ENCODE measurements at regions of chr21 and their contacts with region 1.

Region 1: DNA sequence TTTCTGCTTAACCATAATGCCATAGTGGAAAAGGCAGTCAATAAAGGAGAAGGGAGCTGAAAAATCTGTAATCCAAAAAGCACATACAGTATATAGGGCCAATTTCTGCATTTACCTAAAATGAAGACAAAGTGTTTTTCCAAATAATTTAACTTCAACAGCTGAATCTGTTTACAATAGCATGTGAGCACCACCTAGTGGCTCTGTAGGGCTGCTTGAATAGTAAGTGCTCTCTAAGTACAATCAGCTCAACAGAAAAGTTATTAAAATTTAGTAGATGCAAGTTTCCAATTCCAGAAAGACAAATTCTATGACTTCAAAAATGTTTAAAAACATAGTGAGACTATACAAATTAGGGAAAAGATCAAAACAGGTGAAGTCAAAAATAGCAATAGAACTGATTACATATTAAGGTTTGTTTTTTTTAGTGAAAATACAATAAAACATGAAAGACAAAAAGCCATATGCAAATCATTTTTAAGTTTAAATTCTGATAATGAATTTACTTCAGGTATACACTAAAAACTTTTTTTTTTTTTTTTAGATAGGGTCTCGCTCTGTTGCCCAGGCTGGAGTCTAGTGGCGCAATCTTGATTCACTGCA is 220.0 kb downstream of the SETD4 start:
- ATAC-seq: peak in 4 of 8 experiments; percentile 43 to 58 (median 57)
- H3K4me3 ChIP-seq: no peak overlapping the region
- H3K27ac ChIP-seq: no peak overlapping the region
- H3K4me1 ChIP-seq: no peaks in the 10 kb centered on the region

Region 2: GRCh38 chr21:34745557-34746255 is 1094.6 kb before region 1 on chr21:
- in situ Hi-C with region 1: loop called in 6 of 9 experiments (anchors 25 kb)
- ATAC-seq: peak; percentile 63 to 98 (median 87)
- H3K4me3 ChIP-seq: no peak overlapping the region
- H3K27ac ChIP-seq: no peak overlapping the region
- H3K4me1 ChIP-seq: no peaks in the 10 kb centered on the region

Region 3: GRCh38 chr21:35048706-35049617 is 791.3 kb before region 1 on chr21 and contains the start of gene RUNX1:
- in situ Hi-C with region 1: loop called in 1 of 9 experiments (anchors 25 kb)
- ATAC-seq: no peak
- H3K4me3 ChIP-seq: no peak within 1 kb of the TSS
- H3K27ac ChIP-seq: no peak within 1 kb of the TSS
- H3K4me1 ChIP-seq: peaks cover 11 to 26% of the 10 kb centered on the region in 2 donors
- total RNA-seq, gene RUNX1: 0.05 to 49.0 (median 3.6) TPM

Region 4: DNA sequence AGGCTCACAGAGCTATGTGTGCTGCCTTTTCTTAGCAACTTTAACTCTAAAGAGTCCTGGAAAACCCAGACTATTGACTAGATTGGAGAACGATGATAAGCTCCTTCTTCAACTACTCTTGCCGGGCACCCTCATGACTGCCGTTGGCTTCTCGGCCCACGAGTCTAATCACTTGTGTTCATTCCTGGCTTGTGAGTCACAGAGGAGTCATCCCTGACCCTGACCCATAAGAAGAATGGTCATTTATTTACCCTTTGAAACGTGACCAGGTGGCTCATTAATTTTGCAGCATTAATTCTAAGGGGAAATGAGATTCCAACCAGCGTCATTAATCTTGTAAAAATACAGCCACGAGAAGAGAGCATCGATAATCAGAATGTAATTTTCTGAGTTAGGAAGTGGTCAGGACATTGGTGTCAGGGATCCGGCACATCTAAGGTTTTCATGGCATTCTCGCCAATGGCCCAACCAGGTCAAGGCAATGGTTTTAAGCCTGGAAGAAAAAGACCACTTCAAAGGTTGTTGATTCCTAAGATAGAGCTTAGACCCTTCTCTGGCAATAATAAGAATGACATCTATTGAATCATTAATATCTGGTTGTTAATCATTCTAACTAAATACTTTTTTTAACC is 607.6 kb before region 1 on chr21:
- in situ Hi-C with region 1: no loop called
- ATAC-seq: peak in 5 of 8 experiments; percentile 94 to 99 (median 98)
- H3K4me3 ChIP-seq: no peak overlapping the region
- H3K27ac ChIP-seq: no peak overlapping the region
- H3K4me1 ChIP-seq: peaks cover 11 to 12% of the 10 kb centered on the region in 2 donors

Region 5: GRCh38 chr21:35400233-35400957 is 439.9 kb before region 1 on chr21:
- in situ Hi-C with region 1: loop called in 1 of 9 experiments (anchors 25 kb)
- ATAC-seq: peak in 6 of 8 experiments; percentile 39 to 85 (median 57)
- H3K4me3 ChIP-seq: no peak overlapping the region
- H3K27ac ChIP-seq: no peak overlapping the region
- H3K4me1 ChIP-seq: no peaks in the 10 kb centered on the region

Region 6: GRCh38 chr21:35508139-35508888 is 332.0 kb before region 1 on chr21:
- in situ Hi-C with region 1: loop called in 1 of 9 experiments (anchors 25 kb)
- ATAC-seq: peak in 3 of 8 experiments; percentile 14 to 80 (median 66)
- H3K4me3 ChIP-seq: no peak overlapping the region
- H3K27ac ChIP-seq: no peak overlapping the region
- H3K4me1 ChIP-seq: peaks cover 0 to 12% of the 10 kb centered on the region in 2 donors